Psoas muscle (tissue), 8 donors: ENCODE measurements at regions of chr14 and their contacts with region 1.

Region 1: GRCh38 chr14:92793709-92794546 is at the start of gene GOLGA5:
- DNase-seq: peak; percentile 97 to 99
- ATAC-seq: peak; percentile 99
- H3K4me3 ChIP-seq: peak within 1 kb of the TSS; percentile 84
- H3K27ac ChIP-seq: peak within 1 kb of the TSS; percentile 88
- H3K4me1 ChIP-seq: peaks cover 15% of the 10 kb centered on the region
- H3K27me3 ChIP-seq: no peaks in the 10 kb centered on the region
- CTCF ChIP-seq: peak; percentile 11
- total RNA-seq, gene GOLGA5: 19.8 to 27.7 (median 25.1) TPM

Region 2: DNA sequence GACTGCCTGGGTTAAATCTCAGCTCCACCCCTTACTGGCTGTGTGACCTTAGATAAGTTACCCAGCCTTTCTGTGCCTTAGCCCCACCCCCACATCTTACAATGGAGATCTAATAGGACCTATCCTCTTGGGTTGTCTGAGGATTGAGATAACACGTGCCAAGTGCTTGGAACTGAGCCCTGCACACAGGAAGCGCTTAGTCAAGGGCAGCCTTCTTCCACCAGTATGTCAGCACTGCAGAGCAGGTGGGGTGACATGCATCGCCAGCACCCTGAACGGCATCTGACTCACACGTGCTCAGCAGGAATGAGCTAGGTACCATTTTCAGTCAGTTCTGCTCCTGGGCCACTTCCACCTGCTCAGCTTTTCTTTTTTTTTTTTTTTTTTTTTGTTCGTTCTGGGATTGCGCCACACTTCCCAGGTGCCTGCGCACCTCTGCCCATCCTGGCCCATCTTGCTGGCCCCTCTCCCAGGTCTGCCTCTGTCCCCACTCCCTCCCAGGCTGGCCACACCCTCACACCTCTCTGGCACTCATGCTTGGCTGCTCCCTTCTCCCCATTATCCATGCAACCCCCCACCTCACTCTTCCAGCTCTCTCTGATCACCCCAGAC is 65.1 kb before region 1 on chr14:
- intact Hi-C with region 1: no loop called
- DNase-seq: no peak
- ATAC-seq: peak; percentile 19 to 83 (median 62)
- H3K4me3 ChIP-seq: no peak overlapping the region
- H3K27ac ChIP-seq: no peak overlapping the region
- H3K4me1 ChIP-seq: peaks cover 12% of the 10 kb centered on the region
- H3K27me3 ChIP-seq: no peaks in the 10 kb centered on the region
- CTCF ChIP-seq: no peak

Region 3: GRCh38 chr14:92748259-92749016 is 45.5 kb before region 1 on chr14 and contains the start of gene LGMN:
- intact Hi-C with region 1: loop called in 1 of 2 experiments (anchors 5 kb)
- DNase-seq: peak; percentile 96 to 98
- ATAC-seq: peak; percentile 100
- H3K4me3 ChIP-seq: peak within 1 kb of the TSS; percentile 93
- H3K27ac ChIP-seq: peak within 1 kb of the TSS; percentile 88
- H3K4me1 ChIP-seq: peaks cover 7% of the 10 kb centered on the region
- H3K27me3 ChIP-seq: no peaks in the 10 kb centered on the region
- CTCF ChIP-seq: no peak
- total RNA-seq, gene LGMN: 37.4 to 56.8 (median 55.5) TPM